ENCODE measurements at regions of chr6 and their contacts with region 1.

Region 1: DNA sequence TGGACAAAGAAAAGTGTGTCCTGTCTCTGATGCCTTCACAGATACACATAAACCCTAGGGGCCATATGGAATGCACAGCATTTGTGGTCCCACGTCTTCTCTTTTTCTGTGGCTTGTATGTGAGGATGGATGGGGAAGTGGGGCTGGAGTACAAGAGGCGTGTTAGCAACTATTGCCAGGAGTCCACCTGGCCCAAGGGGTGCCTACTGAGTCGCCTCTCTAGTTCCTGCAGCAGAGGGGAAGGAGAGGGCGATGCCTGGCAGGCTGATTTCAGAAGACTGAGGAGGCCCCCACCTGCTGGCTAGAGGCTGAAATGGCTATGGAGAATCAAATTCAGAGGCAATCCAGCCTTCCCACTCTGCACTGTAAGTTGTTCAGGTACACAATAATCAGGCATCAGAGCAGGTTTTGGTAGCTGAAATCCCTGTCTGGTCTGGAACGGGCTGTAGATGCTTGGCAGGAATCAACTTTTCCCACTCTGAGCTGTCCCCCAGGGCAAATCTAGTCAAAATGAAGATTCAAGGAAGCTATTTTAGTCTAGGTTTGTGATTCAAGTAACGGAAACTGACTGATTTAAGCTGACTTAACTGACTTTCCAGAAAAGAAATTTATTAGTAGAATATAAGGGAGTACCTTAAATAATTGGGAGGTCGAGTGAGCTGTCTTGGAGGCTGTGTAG is 14.9 kb upstream of the PPARD start:
- DNase-seq: peak; percentile 83
- H3K4me3 Mint-ChIP-seq: no peak overlapping the region
- H3K27ac Mint-ChIP-seq: peak overlapping the region; percentile 82
- H3K4me1 Mint-ChIP-seq: peaks cover 28% of the 10 kb centered on the region
- H3K27me3 Mint-ChIP-seq: no peaks in the 10 kb centered on the region

Region 2: GRCh38 chr6:35351410-35351809 is 23.9 kb after region 1 on chr6:
- CTCF ChIA-PET with region 1: interaction called, 10 read pairs
- POLR2A ChIA-PET with region 1: no interaction called
- DNase-seq: no peak
- H3K4me3 Mint-ChIP-seq: no peak overlapping the region
- H3K27ac Mint-ChIP-seq: no peak overlapping the region
- H3K4me1 Mint-ChIP-seq: peaks cover 39% of the 10 kb centered on the region
- H3K27me3 Mint-ChIP-seq: no peaks in the 10 kb centered on the region

Measured in activated CD4-positive, alpha-beta T cell treated with anti-CD3 and anti-CD28 coated beads, Interleukin-2, amount 10 ng/mL, durations not matched to agents 7 days and 5 days (primary cell).